ENCODE measurements at regions of chr19 and their contacts with region 1.

Region 1: GRCh38 chr19:6862673-6863078 is 24.7 kb upstream of the ADGRE1 start:
- DNase-seq: peak; percentile 85 to 92 (median 91)
- H3K4me3 ChIP-seq: peak overlapping the region in 3 of 7 experiments; percentile 60 to 75 (median 69)
- H3K27ac ChIP-seq: no peak overlapping the region
- H3K4me1 ChIP-seq: peaks cover 4 to 40% (median 31%) of the 10 kb centered on the region in 4 experiments
- H3K27me3 ChIP-seq: no peaks in the 10 kb centered on the region

Region 2: GRCh38 chr19:6632002-6632621 is 230.6 kb before region 1 on chr19:
- CTCF ChIA-PET with region 1: interaction called, 10 read pairs
- POLR2A ChIA-PET with region 1: no interaction called
- DNase-seq: peak; percentile 83 to 91 (median 85)
- H3K4me3 ChIP-seq: no peak overlapping the region
- H3K27ac ChIP-seq: no peak overlapping the region
- H3K4me1 ChIP-seq: no peaks in the 10 kb centered on the region
- H3K27me3 ChIP-seq: peaks cover 0 to 4% (median 3%) of the 10 kb centered on the region in 5 experiments

Region 3: DNA sequence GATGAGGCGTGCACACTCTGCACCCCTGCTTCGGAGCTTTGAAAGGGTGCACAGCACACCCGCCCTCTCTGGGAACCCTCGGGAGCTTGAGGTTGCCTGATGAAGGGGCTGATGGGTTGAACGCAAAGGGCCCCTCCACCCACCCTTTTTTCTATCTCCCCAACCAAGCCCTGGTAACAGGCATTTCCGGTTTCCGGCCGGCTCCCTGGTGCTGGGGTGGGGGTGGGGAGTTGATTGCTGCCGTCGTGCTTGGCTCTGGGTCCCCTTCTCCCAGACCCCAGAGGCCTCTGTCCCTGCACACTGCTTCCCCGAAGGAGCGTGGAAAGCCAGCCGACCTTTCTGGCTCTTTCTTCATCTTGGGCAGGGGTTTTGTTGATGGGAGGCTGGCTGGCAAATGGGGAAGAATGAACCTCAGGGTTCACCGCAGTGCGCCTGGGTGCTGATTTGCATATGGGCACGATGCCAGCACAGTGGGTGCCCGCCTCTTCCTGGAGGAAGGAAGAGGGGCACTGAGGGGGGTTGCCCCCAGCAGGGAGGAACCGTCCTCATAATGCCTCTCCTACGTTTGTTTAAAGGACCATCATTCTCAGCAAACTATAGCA is 61.1 kb before region 1 on chr19:
- CTCF ChIA-PET with region 1: interaction called, 18 read pairs
- POLR2A ChIA-PET with region 1: interaction called, 3 read pairs
- DNase-seq: peak; percentile 95 to 96 (median 96)
- H3K4me3 ChIP-seq: peak overlapping the region; percentile 11 to 64 (median 48)
- H3K27ac ChIP-seq: peak overlapping the region; percentile 72 to 87
- H3K4me1 ChIP-seq: peaks cover 3 to 48% (median 41%) of the 10 kb centered on the region in 4 experiments
- H3K27me3 ChIP-seq: no peaks in the 10 kb centered on the region

Region 4: GRCh38 chr19:6835501-6835900 is 27.2 kb before region 1 on chr19:
- CTCF ChIA-PET with region 1: interaction called, 11 read pairs
- POLR2A ChIA-PET with region 1: interaction called, 3 read pairs
- DNase-seq: no peak
- H3K4me3 ChIP-seq: no peak overlapping the region
- H3K27ac ChIP-seq: no peak overlapping the region
- H3K4me1 ChIP-seq: peaks cover 0 to 29% (median 24%) of the 10 kb centered on the region in 4 experiments
- H3K27me3 ChIP-seq: no peaks in the 10 kb centered on the region

Measured in common myeloid progenitor, CD34-positive (primary cell).